WTC11 (cell line): ENCODE measurements at regions of chr2 and their contacts with region 1.

Region 1: GRCh38 chr2:169141713-169142352 is 72.5 kb downstream of the DHRS9 start:
- DNase-seq: peak; percentile 78
- ATAC-seq: peak; percentile 74
- H3K4me3 Mint-ChIP-seq: no peak overlapping the region
- H3K27ac Mint-ChIP-seq: no peak overlapping the region
- H3K4me1 Mint-ChIP-seq: peaks cover 43% of the 10 kb centered on the region
- H3K27me3 Mint-ChIP-seq: no peaks in the 10 kb centered on the region
- CTCF ChIP-seq: peak; percentile 79

Region 2: GRCh38 chr2:169159686-169160085 is 17.9 kb after region 1 on chr2:
- CTCF ChIA-PET with region 1: interaction called, 14 read pairs
- POLR2A ChIA-PET with region 1: no interaction called
- DNase-seq: no peak
- ATAC-seq: no peak
- H3K4me3 Mint-ChIP-seq: no peak overlapping the region
- H3K27ac Mint-ChIP-seq: no peak overlapping the region
- H3K4me1 Mint-ChIP-seq: 0 out of 2 replicates have a peak, but pooled peaks cover 2% of the 10 kb centered on the region
- H3K27me3 Mint-ChIP-seq: no peaks in the 10 kb centered on the region
- CTCF ChIP-seq: no peak

Region 3: DNA sequence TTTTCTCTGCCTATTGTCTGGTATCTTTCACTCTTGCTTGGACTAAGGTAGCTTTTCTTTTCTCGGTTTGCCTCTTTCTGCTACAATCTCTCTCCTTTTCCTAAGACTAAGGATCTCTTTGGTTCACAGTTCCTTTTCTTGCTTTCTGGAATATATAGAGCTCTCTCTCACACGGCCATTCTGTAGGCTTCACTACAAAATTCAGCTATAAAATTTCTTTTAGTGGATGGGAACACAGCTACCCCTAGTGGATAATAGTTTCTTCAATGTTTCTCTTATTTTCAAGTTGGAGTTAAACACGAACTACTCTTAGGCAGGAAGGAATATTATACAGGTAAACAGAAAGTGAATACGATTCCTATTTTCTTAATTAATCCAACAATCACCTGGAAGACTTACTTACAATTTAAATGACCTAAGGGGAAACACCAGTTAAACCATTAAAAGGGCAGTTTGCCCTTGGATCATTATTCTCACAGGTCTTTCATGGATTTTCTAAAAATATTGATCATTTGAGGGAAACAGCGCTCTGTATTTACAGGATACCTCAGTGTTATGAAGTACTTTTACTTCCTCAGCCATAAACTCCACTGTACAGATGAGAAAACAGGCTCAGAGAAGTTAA is 80.0 kb after region 1 on chr2:
- CTCF ChIA-PET with region 1: interaction called, 26 read pairs
- POLR2A ChIA-PET with region 1: no interaction called
- DNase-seq: no peak
- ATAC-seq: peak; percentile 66
- H3K4me3 Mint-ChIP-seq: no peak overlapping the region
- H3K27ac Mint-ChIP-seq: no peak overlapping the region
- H3K4me1 Mint-ChIP-seq: no peaks in the 10 kb centered on the region
- H3K27me3 Mint-ChIP-seq: no peaks in the 10 kb centered on the region
- CTCF ChIP-seq: no peak

Region 4: DNA sequence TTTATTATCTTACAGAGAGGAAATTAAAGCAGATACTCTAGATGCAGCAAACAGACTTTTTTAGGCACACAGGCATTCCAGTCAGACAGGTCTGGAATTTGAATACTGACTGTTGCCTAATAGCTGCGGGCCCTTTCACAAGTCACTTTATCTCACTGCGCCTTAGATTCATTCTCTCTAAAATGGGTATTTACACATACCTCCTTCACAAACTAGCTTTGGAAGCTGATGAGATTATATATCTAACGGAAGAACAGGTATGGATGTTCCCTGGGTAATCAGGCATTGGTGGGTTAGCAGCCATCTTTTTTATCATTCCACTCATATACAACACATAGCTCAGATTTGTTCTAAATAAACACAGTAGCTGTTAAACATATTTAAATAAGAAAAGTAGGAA is 116.3 kb after region 1 on chr2:
- CTCF ChIA-PET with region 1: no interaction called
- POLR2A ChIA-PET with region 1: no interaction called
- DNase-seq: no peak
- ATAC-seq: no peak
- H3K4me3 Mint-ChIP-seq: no peak overlapping the region
- H3K27ac Mint-ChIP-seq: no peak overlapping the region
- H3K4me1 Mint-ChIP-seq: peaks cover 15% of the 10 kb centered on the region
- H3K27me3 Mint-ChIP-seq: no peaks in the 10 kb centered on the region
- CTCF ChIP-seq: no peak